ENCODE measurements at regions of chrX and their contacts with region 1.

Region 1: DNA sequence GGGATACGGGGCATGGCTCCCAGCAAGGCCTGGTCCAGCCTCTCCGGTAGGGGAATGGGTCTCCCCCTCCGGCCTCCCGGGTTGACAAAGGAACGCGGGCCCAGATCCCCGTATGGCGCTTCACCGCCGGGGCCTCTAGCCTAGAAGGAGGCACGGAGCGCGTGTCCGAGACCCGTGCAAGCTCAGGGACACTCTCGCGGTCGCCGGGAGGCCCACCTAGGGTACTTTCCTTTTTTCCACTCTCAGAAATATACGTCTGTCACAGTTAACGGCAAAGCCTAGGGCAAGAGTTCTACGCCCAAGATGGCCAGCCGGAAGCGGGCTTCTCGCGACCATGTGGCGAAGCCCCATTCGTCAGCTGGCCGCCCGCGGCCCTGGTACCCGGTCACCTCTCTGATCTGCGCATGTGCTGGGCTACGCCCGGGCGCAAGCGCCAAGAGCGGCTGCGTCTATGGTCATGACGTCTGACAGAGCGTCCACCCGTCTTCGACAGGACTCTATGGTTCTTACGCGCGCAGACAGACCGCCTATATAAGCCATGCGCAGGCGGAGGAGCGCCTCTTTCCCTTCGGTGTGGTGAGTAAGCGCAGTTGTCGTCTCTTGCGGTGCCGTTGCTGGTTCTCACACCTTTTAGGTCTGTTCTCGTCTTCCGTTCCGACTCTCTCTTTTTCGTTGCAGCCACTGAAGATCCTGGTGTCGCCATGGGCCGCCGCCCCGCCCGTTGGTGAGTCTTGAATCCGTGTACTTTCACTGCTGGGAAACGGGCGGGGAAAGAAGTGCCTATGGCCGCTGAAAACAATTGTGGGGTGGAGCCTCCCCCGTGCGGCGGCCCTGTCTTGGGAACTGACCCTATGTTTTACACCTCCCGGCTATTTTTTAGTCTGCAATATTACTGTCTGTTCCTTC is at the start of gene RPL10:
- DNase-seq: peak; percentile 85 to 96 (median 94)
- H3K4me3 ChIP-seq: peak within 1 kb of the TSS; percentile 53 to 90 (median 74)
- H3K27ac ChIP-seq: peak within 1 kb of the TSS; percentile 86 to 99 (median 96)
- H3K27me3 ChIP-seq: peaks cover 0 to 50% (median 3%) of the 10 kb centered on the region in 45 donors
- CTCF ChIP-seq: peak in 2 of 56 donors; percentile 10 to 22
- total RNA-seq, gene RPL10: 412 to 1,036 (median 652) TPM

Region 2: GRCh38 chrX:154333837-154334271 is 64.2 kb before region 1 on chrX:
- intact Hi-C with region 1: no loop called
- DNase-seq: no peak
- H3K4me3 ChIP-seq: no peak overlapping the region
- H3K27ac ChIP-seq: no peak overlapping the region
- H3K27me3 ChIP-seq: peaks cover 0 to 71% (median 11%) of the 10 kb centered on the region in 45 donors
- CTCF ChIP-seq: no peak

Region 3: GRCh38 chrX:154431341-154431740 is 33.3 kb after region 1 on chrX:
- intact Hi-C with region 1: loop called (anchors 5 kb)
- DNase-seq: no peak
- H3K4me3 ChIP-seq: peak overlapping the region in 15 of 59 donors; percentile 11 to 80 (median 74)
- H3K27ac ChIP-seq: peak overlapping the region in 18 of 59 donors; percentile 7 to 92 (median 38)
- H3K27me3 ChIP-seq: peaks cover 0 to 56% (median 6%) of the 10 kb centered on the region in 45 donors
- CTCF ChIP-seq: no peak

Region 4: GRCh38 chrX:154478728-154479622 is 80.9 kb after region 1 on chrX and contains the start of gene LAGE3:
- intact Hi-C with region 1: no loop called
- DNase-seq: peak; percentile 83 to 96 (median 91)
- H3K4me3 ChIP-seq: peak within 1 kb of the TSS; percentile 37 to 70 (median 58)
- H3K27ac ChIP-seq: peak within 1 kb of the TSS; percentile 18 to 93 (median 86)
- H3K27me3 ChIP-seq: peaks cover 0 to 69% (median 5%) of the 10 kb centered on the region in 45 donors
- CTCF ChIP-seq: peak in 5 of 56 donors; percentile 7 to 14 (median 11)
- total RNA-seq, gene LAGE3: 21.6 to 55.2 (median 36.1) TPM

Measured in dorsolateral prefrontal cortex (tissue), 120 donors.